PC-9 (cell line): ENCODE measurements at regions of chr10 and their contacts with region 1.

Region 1: GRCh38 chr10:122879339-122880273 is at the start of gene FAM24B:
- DNase-seq: peak; percentile 89
- H3K4me3 ChIP-seq: peak within 1 kb of the TSS; percentile 85
- H3K27ac ChIP-seq: peak within 1 kb of the TSS; percentile 75
- H3K4me1 ChIP-seq: peaks cover 16% of the 10 kb centered on the region; the same call in 1 of the 2 replicates
- H3K27me3 ChIP-seq: no peaks in the 10 kb centered on the region
- CTCF ChIP-seq: no peak
- total RNA-seq, gene FAM24B: 10.8 and 14.8 TPM in 2 replicates

Region 2: DNA sequence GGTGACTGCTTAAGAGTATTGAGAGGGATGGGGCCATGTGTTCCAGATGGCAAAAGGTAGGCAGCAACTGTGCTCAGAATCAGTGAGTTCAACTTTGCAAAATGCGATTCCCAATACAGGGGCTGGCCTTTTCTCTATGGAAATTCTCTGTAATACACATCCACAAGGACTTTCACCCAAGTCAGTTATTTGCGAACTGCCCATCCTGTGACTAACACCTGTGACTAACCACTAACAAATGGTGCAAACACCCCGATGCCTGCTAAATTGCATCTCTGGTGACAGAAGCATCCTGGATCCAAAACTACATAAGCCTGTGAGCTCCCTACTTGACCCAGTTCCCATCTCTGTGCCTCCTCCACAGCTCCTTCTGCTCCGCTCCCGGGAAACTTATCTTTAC is 25.0 kb before region 1 on chr10:
- CTCF ChIA-PET with region 1: no interaction called
- POLR2A ChIA-PET with region 1: no interaction called
- intact Hi-C with region 1: no loop called
- DNase-seq: no peak
- H3K4me3 ChIP-seq: no peak overlapping the region
- H3K27ac ChIP-seq: no peak overlapping the region
- H3K4me1 ChIP-seq: peaks cover 9% of the 10 kb centered on the region
- H3K27me3 ChIP-seq: no peaks in the 10 kb centered on the region
- CTCF ChIP-seq: no peak

Region 3: DNA sequence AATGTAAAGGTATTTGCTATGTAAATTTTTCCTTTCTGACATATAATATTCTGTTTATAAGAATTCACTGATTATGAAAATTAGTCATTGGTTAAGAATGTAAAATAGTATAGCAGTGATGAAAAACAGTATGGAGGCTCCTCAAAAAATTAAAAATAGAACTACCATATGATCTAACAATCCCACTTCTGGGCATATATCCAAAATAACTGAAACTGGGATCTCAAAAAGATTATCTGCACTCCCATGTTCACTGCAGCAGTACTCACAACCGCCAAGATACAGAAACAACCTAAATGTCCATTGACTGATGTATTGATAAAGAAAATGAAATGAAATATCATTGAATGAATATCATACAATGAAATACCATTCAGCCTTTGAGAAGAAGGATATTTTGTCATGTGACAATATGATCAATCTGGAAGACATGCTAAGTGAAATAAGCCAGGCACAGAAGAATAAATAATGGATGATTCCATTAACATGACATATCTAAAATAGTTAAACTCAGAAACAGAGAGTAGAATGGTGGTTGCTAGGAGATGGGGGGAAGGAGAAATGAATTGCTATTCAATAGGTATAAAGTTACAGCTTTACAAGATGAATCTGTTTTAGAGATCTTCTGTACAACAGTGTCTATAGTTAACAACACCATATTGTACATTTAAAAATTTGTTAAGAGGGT is 60.4 kb after region 1 on chr10:
- CTCF ChIA-PET with region 1: no interaction called
- POLR2A ChIA-PET with region 1: no interaction called
- intact Hi-C with region 1: loop called (anchors 10 kb)
- DNase-seq: no peak
- H3K4me3 ChIP-seq: no peak overlapping the region
- H3K27ac ChIP-seq: no peak overlapping the region
- H3K4me1 ChIP-seq: no peaks in the 10 kb centered on the region
- H3K27me3 ChIP-seq: no peaks in the 10 kb centered on the region
- CTCF ChIP-seq: no peak